Caco-2 (cell line): ENCODE measurements at regions of chr2 and their contacts with region 1.

Region 1: GRCh38 chr2:165953655-165954606 is at the start of gene TTC21B:
- DNase-seq: peak; percentile 96 to 98
- H3K4me3 ChIP-seq: peak within 1 kb of the TSS; percentile 64
- H3K4me3 Mint-ChIP-seq: no peak within 1 kb of the TSS
- H3K27ac Mint-ChIP-seq: no peak within 1 kb of the TSS
- H3K4me1 ChIP-seq: peaks cover 15% of the 10 kb centered on the region
- H3K4me1 Mint-ChIP-seq: peaks cover 7% of the 10 kb centered on the region
- H3K27me3 ChIP-seq: no peaks in the 10 kb centered on the region
- H3K27me3 Mint-ChIP-seq: no peaks in the 10 kb centered on the region
- CTCF ChIP-seq: peak; percentile 79 to 87
- total RNA-seq, gene TTC21B: 13.5 and 14.2 TPM in 2 replicates

Region 2: DNA sequence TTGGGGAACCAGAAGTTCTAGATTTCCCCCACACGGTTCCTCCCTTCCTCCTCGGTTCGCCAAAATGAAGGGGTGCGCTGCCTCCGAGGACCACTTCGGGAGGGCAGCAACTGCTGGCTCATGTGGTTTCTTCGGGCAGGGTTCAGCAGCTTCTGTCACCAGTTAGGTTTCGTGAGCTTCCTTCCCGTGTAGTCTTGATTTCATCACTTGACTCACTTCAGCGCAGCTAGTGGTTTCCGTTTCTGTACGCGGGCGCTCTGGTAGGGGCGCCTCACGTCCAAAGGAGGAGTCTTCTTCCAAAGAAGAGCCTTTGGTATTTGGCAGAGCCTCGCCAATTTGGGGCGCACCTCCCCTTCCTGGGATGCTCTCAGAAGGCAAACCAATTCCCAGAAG is 159.4 kb before region 1 on chr2:
- CTCF ChIA-PET with region 1: no interaction called
- POLR2A ChIA-PET with region 1: interaction called, 5 read pairs
- intact Hi-C with region 1: loop called (anchors 1 kb)
- DNase-seq: peak in 1 of 2 experiments; percentile 46
- H3K4me3 ChIP-seq: peak overlapping the region; percentile 87
- H3K4me3 Mint-ChIP-seq: peak overlapping the region; percentile 97
- H3K27ac Mint-ChIP-seq: peak overlapping the region; percentile 98
- H3K4me1 ChIP-seq: no peaks in the 10 kb centered on the region
- H3K4me1 Mint-ChIP-seq: peaks cover 11% of the 10 kb centered on the region
- H3K27me3 ChIP-seq: no peaks in the 10 kb centered on the region
- H3K27me3 Mint-ChIP-seq: no peaks in the 10 kb centered on the region
- CTCF ChIP-seq: no peak

Region 3: GRCh38 chr2:165969227-165969626 is 15.3 kb after region 1 on chr2:
- CTCF ChIA-PET with region 1: interaction called, 3 read pairs
- POLR2A ChIA-PET with region 1: no interaction called
- intact Hi-C with region 1: loop called (anchors 1 kb)
- DNase-seq: no peak
- H3K4me3 ChIP-seq: no peak overlapping the region
- H3K4me3 Mint-ChIP-seq: no peak overlapping the region
- H3K27ac Mint-ChIP-seq: no peak overlapping the region
- H3K4me1 ChIP-seq: no peaks in the 10 kb centered on the region
- H3K4me1 Mint-ChIP-seq: peaks cover 7% of the 10 kb centered on the region
- H3K27me3 ChIP-seq: no peaks in the 10 kb centered on the region
- H3K27me3 Mint-ChIP-seq: peaks cover 12% of the 10 kb centered on the region
- CTCF ChIP-seq: no peak

Region 4: DNA sequence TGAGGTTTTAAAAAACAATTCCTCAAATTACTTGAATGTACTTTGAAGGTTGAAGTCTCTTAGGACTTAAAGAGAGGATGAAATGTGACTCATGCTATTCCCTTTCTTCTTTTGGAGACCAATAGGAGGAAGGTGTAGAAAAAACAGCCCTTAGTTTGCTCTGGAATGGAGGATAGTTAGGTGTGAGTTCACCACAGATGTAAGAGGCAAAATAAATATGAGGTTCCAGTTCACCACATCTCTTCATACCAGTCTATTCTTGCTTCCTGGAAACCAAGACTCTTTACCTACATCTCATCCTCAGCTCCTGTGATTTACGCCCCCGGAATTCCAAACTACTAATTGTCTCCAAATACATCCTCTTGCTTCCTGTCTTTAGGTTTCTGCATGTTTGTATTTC is 77.1 kb after region 1 on chr2:
- CTCF ChIA-PET with region 1: no interaction called
- POLR2A ChIA-PET with region 1: no interaction called
- intact Hi-C with region 1: no loop called
- DNase-seq: no peak
- H3K4me3 ChIP-seq: no peak overlapping the region
- H3K4me3 Mint-ChIP-seq: no peak overlapping the region
- H3K27ac Mint-ChIP-seq: no peak overlapping the region
- H3K4me1 ChIP-seq: no peaks in the 10 kb centered on the region
- H3K4me1 Mint-ChIP-seq: no peaks in the 10 kb centered on the region
- H3K27me3 ChIP-seq: no peaks in the 10 kb centered on the region
- H3K27me3 Mint-ChIP-seq: peaks cover 3% of the 10 kb centered on the region
- CTCF ChIP-seq: no peak

Region 5: GRCh38 chr2:166106431-166107015 is 152.6 kb after region 1 on chr2:
- CTCF ChIA-PET with region 1: no interaction called
- POLR2A ChIA-PET with region 1: no interaction called
- intact Hi-C with region 1: loop called (anchors 1 kb)
- DNase-seq: peak in 1 of 2 experiments; percentile 9
- H3K4me3 ChIP-seq: no peak overlapping the region
- H3K4me3 Mint-ChIP-seq: no peak overlapping the region
- H3K27ac Mint-ChIP-seq: no peak overlapping the region
- H3K4me1 ChIP-seq: no peaks in the 10 kb centered on the region
- H3K4me1 Mint-ChIP-seq: no peaks in the 10 kb centered on the region
- H3K27me3 ChIP-seq: no peaks in the 10 kb centered on the region
- H3K27me3 Mint-ChIP-seq: no peaks in the 10 kb centered on the region
- CTCF ChIP-seq: peak; percentile 16 to 51

Region 6: GRCh38 chr2:166127217-166128155 is 173.6 kb after region 1 on chr2 and contains the start of gene SCN1A:
- CTCF ChIA-PET with region 1: interaction called, 11 read pairs
- POLR2A ChIA-PET with region 1: no interaction called
- intact Hi-C with region 1: loop called (anchors 1 kb)
- DNase-seq: peak in 1 of 2 experiments; percentile 32
- H3K4me3 ChIP-seq: no peak within 1 kb of the TSS
- H3K4me3 Mint-ChIP-seq: no peak within 1 kb of the TSS
- H3K27ac Mint-ChIP-seq: no peak within 1 kb of the TSS
- H3K4me1 ChIP-seq: no peaks in the 10 kb centered on the region
- H3K4me1 Mint-ChIP-seq: no peaks in the 10 kb centered on the region
- H3K27me3 ChIP-seq: no peaks in the 10 kb centered on the region; the same call in 1 of the 2 replicates
- H3K27me3 Mint-ChIP-seq: peaks cover 6% of the 10 kb centered on the region
- CTCF ChIP-seq: peak; percentile 53 to 55
- total RNA-seq, gene SCN1A: not detected in 2 replicates

Region 7: DNA sequence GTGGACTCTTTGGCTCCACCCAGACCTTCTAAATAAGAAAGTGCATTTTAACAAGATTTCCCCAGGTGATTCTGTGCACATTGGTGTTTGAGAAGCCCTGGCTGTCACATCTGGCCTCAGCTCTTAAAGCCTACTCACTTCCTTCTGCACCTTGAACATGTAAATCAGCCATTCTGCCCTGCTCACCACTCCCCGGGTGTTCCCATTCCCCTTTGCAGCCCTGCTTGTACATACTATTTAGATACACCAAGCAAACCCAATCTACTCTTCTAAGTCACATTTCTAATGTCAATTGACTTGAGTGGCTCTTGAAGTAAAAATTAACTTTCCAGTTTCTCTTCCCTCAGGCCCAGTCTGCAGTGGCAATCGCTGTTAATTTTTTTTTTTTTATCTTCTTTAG is 187.0 kb after region 1 on chr2:
- CTCF ChIA-PET with region 1: no interaction called
- POLR2A ChIA-PET with region 1: no interaction called
- intact Hi-C with region 1: no loop called
- DNase-seq: no peak
- H3K4me3 ChIP-seq: no peak overlapping the region
- H3K4me3 Mint-ChIP-seq: no peak overlapping the region
- H3K27ac Mint-ChIP-seq: no peak overlapping the region
- H3K4me1 ChIP-seq: peaks cover 1% of the 10 kb centered on the region; the same call in 1 of the 2 replicates
- H3K4me1 Mint-ChIP-seq: no peaks in the 10 kb centered on the region
- H3K27me3 ChIP-seq: no peaks in the 10 kb centered on the region
- H3K27me3 Mint-ChIP-seq: no peaks in the 10 kb centered on the region
- CTCF ChIP-seq: no peak